ENCODE measurements at regions of chr2 and their contacts with region 1.

Region 1: GRCh38 chr2:165651233-165651632 is 142.8 kb downstream of the GALNT3 start:
- DNase-seq: no peak
- ATAC-seq: no peak
- H3K4me3 ChIP-seq: no peak overlapping the region
- H3K4me3 Mint-ChIP-seq: no peak overlapping the region
- H3K27ac ChIP-seq: no peak overlapping the region
- H3K27ac Mint-ChIP-seq: no peak overlapping the region
- H3K4me1 ChIP-seq: no peaks in the 10 kb centered on the region
- H3K4me1 Mint-ChIP-seq: no peaks in the 10 kb centered on the region
- H3K27me3 ChIP-seq: no peaks in the 10 kb centered on the region
- H3K27me3 Mint-ChIP-seq: peaks cover 0 to 6% (median 0%) of the 10 kb centered on the region in 5 donors

Region 2: GRCh38 chr2:165582409-165582808 is 68.8 kb before region 1 on chr2:
- CTCF ChIA-PET with region 1: no interaction called
- POLR2A ChIA-PET with region 1: no interaction called
- intact Hi-C with region 1: loop called in 1 of 2 experiments (anchors 5 kb)
- DNase-seq: no peak
- ATAC-seq: no peak
- H3K4me3 ChIP-seq: no peak overlapping the region
- H3K4me3 Mint-ChIP-seq: no peak overlapping the region
- H3K27ac ChIP-seq: no peak overlapping the region
- H3K27ac Mint-ChIP-seq: no peak overlapping the region
- H3K4me1 ChIP-seq: no peaks in the 10 kb centered on the region
- H3K4me1 Mint-ChIP-seq: no peaks in the 10 kb centered on the region
- H3K27me3 ChIP-seq: no peaks in the 10 kb centered on the region
- H3K27me3 Mint-ChIP-seq: peaks cover 0 to 18% (median 7%) of the 10 kb centered on the region in 5 donors